Mammary epithelial cell (primary cell): ENCODE measurements at regions of chr10 and their contacts with region 1.

Region 1: DNA sequence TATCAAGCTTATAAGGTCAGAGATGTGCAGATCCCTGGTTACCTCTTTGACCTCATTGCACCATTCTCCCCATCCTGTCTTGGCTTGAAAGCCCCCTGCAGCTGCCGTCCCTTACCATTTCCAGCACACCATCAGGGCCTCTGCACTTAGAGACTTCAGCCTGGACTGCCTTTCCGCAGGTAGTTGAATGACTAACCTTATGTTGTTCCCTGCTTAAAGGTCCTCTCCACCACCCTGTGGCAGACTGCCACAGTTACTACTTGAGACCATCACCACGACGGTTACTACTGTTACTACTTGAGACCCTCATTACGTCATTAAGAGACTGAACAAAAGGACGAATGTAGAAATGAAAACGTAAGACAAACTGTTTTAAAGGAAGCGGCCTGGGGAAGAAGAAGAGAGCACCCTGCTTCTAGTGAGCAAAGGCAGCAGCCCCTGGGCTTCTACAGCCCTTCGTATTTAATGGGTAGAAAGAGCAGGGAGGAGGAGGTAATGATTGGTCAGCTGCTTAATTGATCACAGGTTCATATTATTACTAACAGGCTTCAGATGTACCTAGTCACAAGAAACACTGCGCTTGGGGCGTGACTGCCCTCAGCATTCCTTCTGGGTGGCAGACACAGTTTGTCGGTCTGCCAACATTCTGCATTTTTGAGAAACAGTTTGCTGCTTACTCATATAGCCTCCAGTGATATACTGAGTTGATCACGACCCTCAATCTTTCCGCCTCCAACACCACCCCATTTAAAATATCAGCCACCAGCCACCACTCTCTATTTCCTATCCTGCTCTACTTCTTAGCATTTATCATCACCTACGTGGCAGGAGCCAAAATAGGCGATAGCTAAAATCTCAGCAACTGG is 74.1 kb upstream of the PARD3 start:
- DNase-seq: peak; percentile 24
- H3K4me3 ChIP-seq: no peak overlapping the region
- H3K27ac ChIP-seq: no peak overlapping the region
- H3K4me1 ChIP-seq: peaks cover 4% of the 10 kb centered on the region
- H3K27me3 ChIP-seq: no peaks in the 10 kb centered on the region
- CTCF ChIP-seq: no peak

Region 2: DNA sequence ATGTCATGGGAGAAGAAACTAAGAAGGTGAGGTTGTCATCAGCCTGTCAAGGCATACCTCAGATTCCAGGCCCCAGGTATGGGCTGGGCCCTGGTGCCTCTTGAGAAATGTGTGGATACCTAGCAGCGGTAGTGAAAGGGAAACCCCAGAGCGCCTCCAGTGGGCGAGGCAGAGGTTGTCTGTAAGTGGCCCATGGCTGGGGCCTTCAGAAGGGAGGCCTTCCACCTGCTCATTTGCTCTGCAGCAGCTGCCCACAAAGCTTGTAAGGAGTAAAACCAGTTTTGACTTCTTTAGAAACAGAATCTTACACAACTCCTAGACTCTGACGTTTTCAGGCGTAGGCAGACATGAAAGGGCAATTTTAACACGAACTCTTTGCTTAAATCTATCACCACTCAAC is 584.0 kb before region 1 on chr10:
- CTCF ChIA-PET with region 1: no interaction called
- dilution Hi-C with region 1: no loop called
- in situ Hi-C with region 1: no loop called
- intact Hi-C with region 1: no loop called
- DNase-seq: peak; percentile 57
- H3K4me3 ChIP-seq: no peak overlapping the region
- H3K27ac ChIP-seq: no peak overlapping the region
- H3K4me1 ChIP-seq: no peaks in the 10 kb centered on the region
- H3K27me3 ChIP-seq: no peaks in the 10 kb centered on the region
- CTCF ChIP-seq: peak; percentile 26 to 36

Region 3: DNA sequence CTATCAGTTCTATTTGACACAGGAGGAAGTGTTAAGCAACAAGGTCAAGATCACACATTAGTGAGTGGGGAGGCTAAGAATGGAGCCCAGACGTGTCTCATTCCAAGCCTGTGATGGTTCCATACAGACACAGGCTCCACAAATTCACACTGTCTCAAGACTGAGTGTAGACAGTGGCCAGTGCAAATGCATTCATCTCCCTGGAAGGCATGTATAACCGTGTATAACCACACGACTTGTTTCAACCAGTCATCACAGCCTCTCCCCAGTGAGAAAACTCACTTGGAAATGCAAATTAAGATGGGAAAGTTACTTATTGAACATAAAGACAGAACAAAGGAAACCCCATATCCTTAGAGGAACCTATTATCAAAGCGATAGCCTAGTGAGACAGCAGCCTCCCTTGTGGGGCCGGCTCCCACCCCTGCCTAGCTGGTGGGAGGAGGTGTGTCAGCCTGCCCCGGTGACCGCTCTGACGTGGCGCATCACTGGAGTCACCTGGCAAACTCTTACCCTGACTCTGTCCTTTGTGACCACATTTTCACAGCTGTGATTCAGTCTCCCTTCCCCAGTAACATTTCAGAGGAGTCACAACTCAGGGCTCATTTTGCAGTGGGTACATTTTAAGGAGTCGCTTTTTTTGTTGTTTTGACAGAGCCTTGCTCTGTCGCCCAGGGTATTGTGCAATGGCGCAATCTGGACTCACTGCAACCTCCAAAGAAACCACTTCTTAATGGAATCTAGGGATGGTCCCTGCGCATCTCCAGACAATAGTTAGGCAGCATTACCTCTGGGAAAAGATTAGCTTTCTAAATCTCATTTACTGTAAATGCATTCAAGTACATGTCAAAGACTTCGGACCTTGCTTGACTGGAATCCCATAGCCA is 52.5 kb after region 1 on chr10:
- CTCF ChIA-PET with region 1: no interaction called
- dilution Hi-C with region 1: loop called (anchors 5 kb)
- in situ Hi-C with region 1: no loop called
- intact Hi-C with region 1: no loop called
- DNase-seq: peak; percentile 95
- H3K4me3 ChIP-seq: peak overlapping the region in 1 of 3 experiments; percentile 15
- H3K27ac ChIP-seq: peak overlapping the region; percentile 84
- H3K4me1 ChIP-seq: peaks cover 28% of the 10 kb centered on the region
- H3K27me3 ChIP-seq: no peaks in the 10 kb centered on the region
- CTCF ChIP-seq: no peak

Region 4: GRCh38 chr10:34960983-34961382 is 71.7 kb after region 1 on chr10:
- CTCF ChIA-PET with region 1: no interaction called
- dilution Hi-C with region 1: no loop called
- in situ Hi-C with region 1: no loop called
- intact Hi-C with region 1: no loop called
- DNase-seq: peak; percentile 18
- H3K4me3 ChIP-seq: no peak overlapping the region
- H3K27ac ChIP-seq: no peak overlapping the region
- H3K4me1 ChIP-seq: no peaks in the 10 kb centered on the region
- H3K27me3 ChIP-seq: no peaks in the 10 kb centered on the region
- CTCF ChIP-seq: peak; percentile 18 to 48